RWPE1 (cell line): ENCODE measurements at regions of chr2 and their contacts with region 1.

Region 1: GRCh38 chr2:170873035-170873692 is 55.9 kb upstream of the GORASP2 start:
- DNase-seq: peak; percentile 84
- H3K27ac ChIP-seq: no peak overlapping the region
- CTCF ChIP-seq: peak; percentile 94

Region 2: GRCh38 chr2:170703776-170704476 is 169.2 kb before region 1 on chr2:
- CTCF ChIA-PET with region 1: interaction called, 10 read pairs
- POLR2A ChIA-PET with region 1: no interaction called
- DNase-seq: no peak
- H3K27ac ChIP-seq: no peak overlapping the region
- CTCF ChIP-seq: no peak